ENCODE measurements at regions of chr6 and their contacts with region 1.

Region 1: GRCh38 chr6:133166766-133167165 is 74.4 kb upstream of the EYA4 start:
- DNase-seq: no peak
- H3K4me3 ChIP-seq: no peak overlapping the region
- H3K27ac ChIP-seq: no peak overlapping the region
- H3K4me1 ChIP-seq: no peaks in the 10 kb centered on the region
- H3K27me3 ChIP-seq: no peaks in the 10 kb centered on the region
- CTCF ChIP-seq: no peak
- EP300 ChIP-seq: no peak
- POLR2A ChIP-seq: no peak

Region 2: DNA sequence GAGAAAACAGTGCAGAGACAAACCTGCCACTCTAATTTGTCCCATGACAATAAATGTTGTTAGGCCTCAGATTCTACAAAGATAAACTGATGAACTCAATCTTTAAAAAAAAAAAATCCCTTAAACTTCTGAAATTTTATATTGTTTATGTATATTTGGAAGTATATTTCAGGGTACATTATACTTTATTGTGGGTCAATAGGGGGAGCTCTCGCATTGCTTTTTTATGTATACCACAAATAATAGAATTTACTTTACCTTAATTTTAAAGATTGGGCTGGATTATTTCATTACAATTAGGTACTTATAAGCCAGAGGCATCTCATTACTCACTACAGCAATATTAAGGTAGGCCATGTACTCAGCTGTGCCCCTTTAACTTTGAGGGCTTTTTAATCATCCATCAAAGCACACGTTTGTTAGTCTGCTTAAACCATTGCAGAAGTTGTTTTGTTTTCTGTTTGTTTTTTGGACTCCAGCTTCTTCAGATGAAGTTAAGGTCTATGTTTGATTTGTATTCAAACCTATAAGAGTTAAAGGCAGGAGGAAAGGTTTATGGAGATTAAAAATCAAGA is 18.1 kb after region 1 on chr6:
- in situ Hi-C with region 1: no loop called
- intact Hi-C with region 1: loop called (anchors 1 kb)
- DNase-seq: no peak
- H3K4me3 ChIP-seq: no peak overlapping the region
- H3K27ac ChIP-seq: no peak overlapping the region
- H3K4me1 ChIP-seq: no peaks in the 10 kb centered on the region
- H3K27me3 ChIP-seq: no peaks in the 10 kb centered on the region
- CTCF ChIP-seq: peak in 4 of 5 experiments; percentile 16 to 49 (median 30)
- EP300 ChIP-seq: no peak
- POLR2A ChIP-seq: no peak

Measured in transverse colon (tissue), 4 donors.